Calu3 (cell line): ENCODE measurements at regions of chr2 and their contacts with region 1.

Region 1: GRCh38 chr2:166361351-166362153 is 14.2 kb downstream of the SCN9A start:
- DNase-seq: peak; percentile 6
- H3K4me3 Mint-ChIP-seq: no peak overlapping the region
- H3K27ac Mint-ChIP-seq: no peak overlapping the region
- H3K4me1 Mint-ChIP-seq: peaks cover 10% of the 10 kb centered on the region
- H3K27me3 Mint-ChIP-seq: no peaks in the 10 kb centered on the region
- CTCF ChIP-seq: no peak

Region 2: DNA sequence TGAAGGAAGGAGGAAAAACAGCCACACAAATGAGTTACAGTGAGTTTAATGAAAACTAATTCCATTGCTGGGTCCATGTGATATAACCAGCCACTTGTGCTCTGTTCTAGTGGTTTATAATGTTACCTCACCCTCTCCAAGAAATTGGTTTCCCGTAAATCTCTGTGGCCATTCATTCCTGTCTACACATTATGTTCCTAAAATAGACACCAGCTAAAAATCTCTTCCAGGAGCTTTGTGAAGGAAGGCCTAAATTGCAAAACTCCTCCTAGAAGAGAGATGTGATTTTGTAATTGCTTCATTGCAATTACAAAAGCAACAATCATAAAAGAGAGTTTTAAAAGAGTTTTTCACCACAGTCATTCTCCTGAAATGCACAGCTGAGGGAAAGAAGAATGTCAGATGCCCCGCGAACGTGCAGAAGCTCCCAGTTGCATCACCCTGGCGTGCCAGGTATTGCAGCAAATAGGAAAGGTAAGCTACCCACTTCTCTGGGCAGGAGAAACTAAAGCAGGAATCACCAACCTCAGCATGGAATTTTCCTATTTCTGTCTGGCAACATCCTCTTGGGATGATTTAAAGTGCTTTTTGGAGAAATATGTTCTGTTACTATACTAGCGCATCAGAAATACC is 235.4 kb before region 1 on chr2:
- CTCF ChIA-PET with region 1: no interaction called
- intact Hi-C with region 1: no loop called
- DNase-seq: no peak
- H3K4me3 Mint-ChIP-seq: no peak overlapping the region
- H3K27ac Mint-ChIP-seq: no peak overlapping the region
- H3K4me1 Mint-ChIP-seq: peaks cover 14% of the 10 kb centered on the region
- H3K27me3 Mint-ChIP-seq: no peaks in the 10 kb centered on the region
- CTCF ChIP-seq: no peak

Region 3: GRCh38 chr2:166384774-166385173 is 23.2 kb after region 1 on chr2:
- CTCF ChIA-PET with region 1: no interaction called
- intact Hi-C with region 1: loop called (anchors 1 kb)
- DNase-seq: peak; percentile 32
- H3K4me3 Mint-ChIP-seq: no peak overlapping the region
- H3K27ac Mint-ChIP-seq: no peak overlapping the region
- H3K4me1 Mint-ChIP-seq: no peaks in the 10 kb centered on the region
- H3K27me3 Mint-ChIP-seq: no peaks in the 10 kb centered on the region
- CTCF ChIP-seq: peak; percentile 44

Region 4: GRCh38 chr2:166417669-166418068 is 56.1 kb after region 1 on chr2:
- CTCF ChIA-PET with region 1: interaction called, 5 read pairs
- intact Hi-C with region 1: loop called (anchors 2 kb)
- DNase-seq: no peak
- H3K4me3 Mint-ChIP-seq: no peak overlapping the region
- H3K27ac Mint-ChIP-seq: no peak overlapping the region
- H3K4me1 Mint-ChIP-seq: no peaks in the 10 kb centered on the region
- H3K27me3 Mint-ChIP-seq: no peaks in the 10 kb centered on the region
- CTCF ChIP-seq: no peak

Region 5: DNA sequence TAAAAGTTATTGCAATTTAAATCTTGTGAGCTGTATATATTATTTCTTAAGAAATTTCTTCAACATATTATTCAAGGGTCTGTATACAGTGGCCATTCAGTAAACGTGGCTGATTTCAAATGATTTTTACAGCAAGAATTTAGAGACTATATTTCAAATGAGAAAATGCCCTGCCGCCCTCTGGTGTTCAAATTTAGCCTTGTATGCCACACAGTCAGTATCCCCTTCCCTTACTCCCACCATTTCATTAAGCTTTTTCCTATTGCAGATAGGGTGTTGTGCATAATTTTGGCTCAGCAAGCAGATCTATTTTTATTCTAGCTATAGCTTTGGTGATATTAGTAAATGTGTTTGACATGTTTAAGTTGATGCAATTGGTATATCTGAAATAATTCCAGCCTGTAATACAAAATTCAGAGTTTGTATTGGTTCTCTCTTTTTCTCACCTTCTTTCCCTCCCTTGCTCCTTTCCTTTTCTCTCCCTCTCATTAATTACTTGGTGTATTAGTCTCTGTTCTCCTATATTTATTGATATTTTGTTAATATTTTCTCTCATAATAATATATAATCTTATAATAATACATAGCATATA is 155.3 kb after region 1 on chr2:
- CTCF ChIA-PET with region 1: interaction called, 3 read pairs
- intact Hi-C with region 1: loop called (anchors 2 kb)
- DNase-seq: peak; percentile 43
- H3K4me3 Mint-ChIP-seq: no peak overlapping the region
- H3K27ac Mint-ChIP-seq: no peak overlapping the region
- H3K4me1 Mint-ChIP-seq: no peaks in the 10 kb centered on the region
- H3K27me3 Mint-ChIP-seq: no peaks in the 10 kb centered on the region
- CTCF ChIP-seq: peak; percentile 25